Transverse colon (tissue), 4 donors: ENCODE measurements at regions of chr6 and their contacts with region 1.

Region 1: DNA sequence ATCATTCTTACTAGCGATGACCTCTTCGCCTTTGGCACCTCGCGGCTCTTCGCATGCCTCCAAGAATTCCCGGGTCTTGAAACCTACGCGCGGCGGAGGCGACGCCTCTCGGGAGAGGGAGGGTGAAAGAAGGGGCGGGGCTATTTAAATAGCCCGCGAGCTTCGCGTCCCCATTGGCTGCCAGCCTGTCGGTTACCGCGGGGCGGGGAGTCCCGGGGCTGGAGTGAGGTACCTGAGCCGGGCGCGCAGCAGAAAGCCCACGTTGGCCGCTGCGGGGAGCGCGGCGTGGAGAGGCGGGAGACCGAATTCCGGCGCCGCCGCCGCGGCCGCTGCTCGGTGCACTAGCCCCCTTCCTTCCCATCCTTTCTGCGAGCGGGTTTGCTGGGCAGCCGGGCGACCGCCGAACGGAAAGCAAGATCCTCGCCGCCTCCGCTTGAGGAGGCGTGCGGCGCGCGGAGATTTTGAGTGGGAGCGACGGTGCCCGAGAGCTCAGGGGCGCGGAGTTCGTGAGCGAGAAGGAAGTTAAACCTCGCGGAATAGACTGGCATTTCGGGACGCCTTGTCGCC is at the start of gene BMP6:
- DNase-seq: peak; percentile 88
- H3K4me3 ChIP-seq: peak within 1 kb of the TSS; percentile 13 to 71 (median 41)
- H3K27ac ChIP-seq: peak within 1 kb of the TSS in 1 of 4 donors; percentile 15
- H3K4me1 ChIP-seq: peaks cover 4 to 34% (median 30%) of the 10 kb centered on the region in 4 donors
- H3K27me3 ChIP-seq: peaks cover 87% of the 10 kb centered on the region
- CTCF ChIP-seq: no peak
- EP300 ChIP-seq: no peak
- POLR2A ChIP-seq: no peak
- total RNA-seq, gene BMP6: 1.1 to 12.7 (median 6.7) TPM

Region 2: DNA sequence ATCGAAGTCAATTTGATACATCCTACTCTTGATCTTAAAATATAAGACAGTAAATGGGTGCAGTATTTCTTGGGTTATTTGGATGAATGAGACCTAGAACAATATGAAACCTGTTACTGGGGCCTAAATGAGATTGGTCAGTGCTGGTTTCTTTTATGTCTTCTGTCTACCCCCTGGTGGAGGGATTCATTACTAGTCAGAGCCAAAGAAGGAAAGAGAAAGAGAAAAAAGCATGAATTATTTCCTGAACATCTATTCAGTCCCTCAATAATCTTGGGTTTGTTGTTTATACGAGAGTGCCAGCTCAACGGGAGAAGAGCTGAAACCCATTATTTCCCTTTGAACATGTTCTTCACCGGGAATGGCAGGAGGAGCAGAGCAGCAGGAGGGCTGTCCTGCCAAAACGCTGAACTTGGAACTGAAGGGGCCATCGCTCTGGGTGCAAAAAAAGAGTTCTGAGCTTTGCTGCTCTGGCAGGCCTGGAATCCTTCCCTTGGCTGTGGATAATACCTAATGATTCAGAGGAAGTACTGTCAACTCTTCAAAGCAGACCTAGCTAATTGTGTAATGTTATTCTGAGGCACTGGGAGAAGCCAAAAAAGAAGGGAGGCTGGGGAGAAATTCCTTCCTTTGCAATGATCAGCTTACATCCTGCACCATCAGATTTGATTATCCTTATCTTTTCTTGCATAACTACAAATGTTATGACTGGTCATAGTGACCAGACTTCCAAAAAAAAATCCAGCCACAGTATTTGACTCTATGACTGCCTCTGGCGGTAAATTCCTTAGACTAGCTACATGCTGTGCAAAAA is 266.3 kb after region 1 on chr6:
- in situ Hi-C with region 1: loop called in 1 of 4 experiments (anchors 25 kb)
- intact Hi-C with region 1: no loop called
- DNase-seq: no peak
- H3K4me3 ChIP-seq: no peak overlapping the region
- H3K27ac ChIP-seq: peak overlapping the region in 2 of 4 donors; percentile 21 to 59
- H3K4me1 ChIP-seq: peaks cover 0 to 15% (median 2%) of the 10 kb centered on the region in 4 donors
- H3K27me3 ChIP-seq: no peaks in the 10 kb centered on the region
- CTCF ChIP-seq: peak; percentile 31 to 57 (median 40)
- EP300 ChIP-seq: no peak
- POLR2A ChIP-seq: no peak

Region 3: DNA sequence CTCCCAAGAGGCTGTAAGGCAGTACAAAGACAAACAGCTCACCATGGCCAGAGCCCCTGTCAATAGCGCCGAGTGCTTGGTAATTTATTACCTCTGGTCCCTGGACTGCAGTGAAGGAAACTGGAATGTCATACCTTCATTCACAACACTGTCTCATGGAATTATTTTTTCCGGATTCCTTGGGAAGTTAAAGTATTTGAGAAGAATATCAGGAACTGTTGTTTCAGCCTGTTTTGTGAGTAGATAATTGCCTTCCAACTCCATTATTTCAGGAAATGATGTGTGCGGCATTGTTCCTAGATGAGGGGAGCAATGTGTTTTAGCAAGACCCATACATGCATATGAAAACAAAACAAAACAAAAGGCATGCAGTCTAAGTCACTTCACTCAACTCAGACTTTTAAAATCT is 274.3 kb after region 1 on chr6:
- in situ Hi-C with region 1: loop called (anchors 5 to 25 kb)
- intact Hi-C with region 1: no loop called
- DNase-seq: no peak
- H3K4me3 ChIP-seq: no peak overlapping the region
- H3K27ac ChIP-seq: no peak overlapping the region
- H3K4me1 ChIP-seq: peaks cover 4 to 23% (median 6%) of the 10 kb centered on the region in 4 donors
- H3K27me3 ChIP-seq: no peaks in the 10 kb centered on the region
- CTCF ChIP-seq: no peak
- EP300 ChIP-seq: no peak
- POLR2A ChIP-seq: no peak

Region 4: GRCh38 chr6:8006208-8006607 is 280.3 kb after region 1 on chr6:
- in situ Hi-C with region 1: loop called in 3 of 4 experiments (anchors 5 to 10 kb)
- intact Hi-C with region 1: no loop called
- DNase-seq: no peak
- H3K4me3 ChIP-seq: no peak overlapping the region
- H3K27ac ChIP-seq: no peak overlapping the region
- H3K4me1 ChIP-seq: no peaks in the 10 kb centered on the region
- H3K27me3 ChIP-seq: no peaks in the 10 kb centered on the region
- CTCF ChIP-seq: peak; percentile 32 to 44 (median 42)
- EP300 ChIP-seq: no peak
- POLR2A ChIP-seq: no peak

Region 5: GRCh38 chr6:8027965-8028651 is 302.2 kb after region 1 on chr6:
- in situ Hi-C with region 1: no loop called
- intact Hi-C with region 1: no loop called
- DNase-seq: no peak
- H3K4me3 ChIP-seq: no peak overlapping the region
- H3K27ac ChIP-seq: no peak overlapping the region
- H3K4me1 ChIP-seq: peaks cover 0 to 3% (median 0%) of the 10 kb centered on the region in 4 donors
- H3K27me3 ChIP-seq: no peaks in the 10 kb centered on the region
- CTCF ChIP-seq: no peak
- EP300 ChIP-seq: no peak
- POLR2A ChIP-seq: no peak

Region 6: GRCh38 chr6:8219352-8219943 is 493.5 kb after region 1 on chr6:
- in situ Hi-C with region 1: loop called in 1 of 4 experiments (anchors 25 kb)
- intact Hi-C with region 1: no loop called
- DNase-seq: peak; percentile 33
- H3K4me3 ChIP-seq: no peak overlapping the region
- H3K27ac ChIP-seq: no peak overlapping the region
- H3K4me1 ChIP-seq: no peaks in the 10 kb centered on the region
- H3K27me3 ChIP-seq: peaks cover 5% of the 10 kb centered on the region
- CTCF ChIP-seq: peak; percentile 73 to 83 (median 76)
- EP300 ChIP-seq: no peak
- POLR2A ChIP-seq: no peak